Activated naive CD8-positive, alpha-beta T cell treated with anti-CD3 and anti-CD28 coated beads, Interleukin-2, amount 10 ng/mL, durations not matched to agents 7 days and 5 days (primary cell): ENCODE measurements at regions of chr15 and their contacts with region 1.

Region 1: DNA sequence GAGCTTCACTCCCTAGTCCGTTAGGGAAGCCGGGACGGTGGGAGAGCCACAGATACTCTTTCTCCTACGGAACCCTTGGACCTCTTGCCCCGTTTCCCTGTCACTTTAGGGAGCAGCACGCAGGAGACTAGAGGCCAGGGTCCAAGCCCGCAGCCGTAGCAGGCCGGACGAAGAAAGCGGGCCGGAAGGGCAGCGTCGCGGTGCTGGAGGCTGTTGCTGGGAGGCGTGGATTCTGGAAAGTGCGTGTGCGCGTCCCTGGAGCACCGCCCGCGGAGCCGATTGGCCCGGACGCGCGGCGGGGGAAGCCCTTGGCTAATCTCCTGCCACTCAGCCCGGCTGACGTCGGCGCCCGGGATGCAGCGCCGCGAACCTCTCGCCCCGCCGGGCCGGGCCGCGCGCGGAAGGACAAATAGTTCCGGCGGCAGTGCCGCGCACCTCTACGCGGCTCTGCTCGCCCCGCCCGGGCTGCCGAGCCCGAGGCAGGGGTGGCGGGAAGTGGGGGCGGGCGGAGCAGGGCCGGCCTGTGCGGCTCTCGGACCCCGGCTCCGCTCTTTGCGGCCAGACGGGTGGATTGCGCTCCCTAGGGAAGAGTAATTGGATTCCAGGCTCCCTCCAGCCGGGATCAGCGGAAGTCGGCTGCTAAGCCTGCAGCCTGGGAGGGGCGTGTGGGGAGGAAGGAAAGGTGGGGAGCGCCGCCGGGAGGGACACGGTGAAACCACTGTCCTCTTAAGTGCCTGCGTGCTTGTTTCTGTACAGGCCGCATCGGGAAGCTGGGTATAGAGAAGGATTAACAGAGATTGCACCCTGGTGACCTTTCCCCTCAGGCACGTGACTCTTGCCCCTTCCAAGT is 31.3 kb upstream of the TCF12 start:
- DNase-seq: peak; percentile 86
- ATAC-seq: peak; percentile 91
- H3K4me3 Mint-ChIP-seq: peak overlapping the region; percentile 80
- H3K27ac Mint-ChIP-seq: peak overlapping the region; percentile 76
- H3K4me1 Mint-ChIP-seq: peaks cover 18% of the 10 kb centered on the region
- H3K27me3 Mint-ChIP-seq: no peaks in the 10 kb centered on the region

Region 2: DNA sequence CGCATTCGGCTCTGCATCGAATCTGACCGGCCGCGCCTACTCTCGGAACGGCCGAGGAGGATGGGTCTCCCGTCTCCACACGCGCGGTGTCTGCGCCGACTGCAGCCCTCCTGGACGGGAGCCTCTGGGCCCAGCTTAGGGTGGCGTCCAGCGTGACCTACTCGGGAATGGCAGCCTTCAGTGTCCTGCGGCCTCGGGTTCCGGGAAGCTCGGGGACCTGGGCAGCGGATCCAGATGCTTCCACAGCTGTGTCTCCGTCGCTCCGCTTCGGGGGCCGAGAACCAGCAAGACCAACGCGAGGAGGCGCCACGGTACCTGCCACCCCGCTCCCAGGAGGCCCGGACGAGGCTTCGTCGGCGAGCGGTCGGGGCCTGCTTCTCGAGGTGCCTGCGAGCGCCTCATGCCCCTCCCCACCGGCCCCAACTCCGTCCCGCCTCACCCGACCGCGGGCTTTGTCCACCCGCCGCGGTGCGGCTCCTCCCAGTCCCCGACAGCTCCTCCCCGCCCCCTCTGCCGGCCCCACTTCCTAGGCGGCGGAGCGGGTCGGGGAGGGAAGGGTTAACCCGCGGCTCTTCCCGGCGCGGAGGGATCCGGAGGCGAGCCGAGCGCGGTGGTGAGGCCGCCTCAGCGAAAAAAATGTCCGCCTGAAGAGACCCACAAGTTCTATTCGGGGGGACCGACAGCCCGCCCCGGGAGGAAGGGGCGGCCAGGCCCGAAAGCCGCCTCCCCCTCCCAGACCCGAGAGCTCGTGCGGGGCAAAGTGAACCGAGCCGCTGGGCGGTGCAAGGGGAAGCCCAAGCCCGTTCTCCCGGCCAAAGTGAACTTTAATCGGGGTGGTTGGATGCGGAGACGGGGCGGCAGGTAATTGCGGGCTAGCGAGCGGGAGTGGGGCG is 31.1 kb after region 1 on chr15 and contains the start of gene TCF12:
- POLR2A ChIA-PET with region 1: interaction called, 31 read pairs
- DNase-seq: peak; percentile 93
- ATAC-seq: peak; percentile 85
- H3K4me3 Mint-ChIP-seq: peak within 1 kb of the TSS; percentile 82
- H3K27ac Mint-ChIP-seq: peak within 1 kb of the TSS; percentile 76
- H3K4me1 Mint-ChIP-seq: peaks cover 25% of the 10 kb centered on the region
- H3K27me3 Mint-ChIP-seq: no peaks in the 10 kb centered on the region
- total RNA-seq, gene TCF12: 76.4 to 78.1 TPM